BJ (cell line): ENCODE measurements at regions of chr9 and their contacts with region 1.

Region 1: GRCh38 chr9:112207451-112207850 is 32.4 kb upstream of the SUSD1 start:
- DNase-seq: no peak
- H3K4me3 ChIP-seq: no peak overlapping the region
- H3K27me3 ChIP-seq: no peaks in the 10 kb centered on the region
- CTCF ChIP-seq: no peak

Region 2: DNA sequence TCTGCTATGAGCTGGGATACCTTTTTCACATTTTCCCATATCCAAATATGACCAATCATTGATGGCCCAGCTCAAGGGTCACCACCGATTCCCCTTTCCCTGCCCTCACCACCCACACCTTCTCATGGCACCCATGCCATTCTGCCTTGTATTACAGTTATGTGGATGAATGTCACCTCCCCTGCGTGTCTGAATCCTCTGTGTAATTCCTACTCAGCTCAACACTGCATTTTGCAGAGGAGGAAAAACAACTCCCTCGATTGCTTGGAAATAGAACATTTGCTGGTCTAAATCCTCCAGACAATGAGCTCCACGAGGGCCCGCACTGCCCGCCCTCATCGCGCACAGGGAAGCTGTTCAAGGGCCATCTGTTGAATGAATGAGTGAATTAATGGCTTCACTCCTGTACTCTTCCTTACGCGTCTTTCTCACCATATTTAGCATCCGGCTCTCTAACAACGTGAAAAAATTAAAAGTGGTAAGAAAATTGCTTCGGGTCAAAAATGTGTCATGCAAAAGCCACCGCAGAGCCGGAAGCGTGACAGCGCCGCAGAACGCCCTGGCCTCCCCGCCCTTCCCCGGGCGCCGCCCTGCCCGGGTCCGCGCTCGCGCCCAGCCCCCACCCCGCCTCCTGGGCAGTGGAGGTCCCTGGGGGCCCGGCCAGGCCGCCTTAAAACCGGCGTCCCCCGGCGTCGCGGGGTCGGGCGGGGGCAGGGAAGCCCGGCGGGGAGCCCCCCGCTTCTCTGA is 33.1 kb before region 1 on chr9:
- CTCF ChIA-PET with region 1: no interaction called
- POLR2A ChIA-PET with region 1: no interaction called
- DNase-seq: no peak
- H3K4me3 ChIP-seq: peak overlapping the region; percentile 50
- H3K27me3 ChIP-seq: no peaks in the 10 kb centered on the region
- CTCF ChIP-seq: no peak

Region 3: DNA sequence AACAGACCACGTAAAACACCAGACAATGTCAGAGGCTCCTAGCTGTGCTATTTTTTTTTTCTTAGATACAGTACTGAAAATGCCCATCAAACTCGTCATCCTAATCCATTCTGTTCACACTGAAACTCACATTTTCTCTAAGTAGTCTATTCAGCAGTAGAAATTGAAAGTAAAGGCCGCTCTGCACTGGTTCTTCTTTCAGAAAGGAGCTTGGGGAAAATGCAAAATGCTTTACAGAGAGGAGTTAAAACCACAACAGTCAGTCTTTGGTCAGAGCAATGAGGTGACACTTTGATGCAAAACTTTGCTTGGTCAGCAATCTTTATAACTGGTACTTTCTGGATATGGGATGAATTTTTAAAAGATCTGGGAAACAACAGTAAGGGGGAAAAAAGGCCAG is 11.5 kb after region 1 on chr9:
- CTCF ChIA-PET with region 1: no interaction called
- POLR2A ChIA-PET with region 1: no interaction called
- DNase-seq: no peak
- H3K4me3 ChIP-seq: no peak overlapping the region
- H3K27me3 ChIP-seq: no peaks in the 10 kb centered on the region
- CTCF ChIP-seq: no peak

Region 4: DNA sequence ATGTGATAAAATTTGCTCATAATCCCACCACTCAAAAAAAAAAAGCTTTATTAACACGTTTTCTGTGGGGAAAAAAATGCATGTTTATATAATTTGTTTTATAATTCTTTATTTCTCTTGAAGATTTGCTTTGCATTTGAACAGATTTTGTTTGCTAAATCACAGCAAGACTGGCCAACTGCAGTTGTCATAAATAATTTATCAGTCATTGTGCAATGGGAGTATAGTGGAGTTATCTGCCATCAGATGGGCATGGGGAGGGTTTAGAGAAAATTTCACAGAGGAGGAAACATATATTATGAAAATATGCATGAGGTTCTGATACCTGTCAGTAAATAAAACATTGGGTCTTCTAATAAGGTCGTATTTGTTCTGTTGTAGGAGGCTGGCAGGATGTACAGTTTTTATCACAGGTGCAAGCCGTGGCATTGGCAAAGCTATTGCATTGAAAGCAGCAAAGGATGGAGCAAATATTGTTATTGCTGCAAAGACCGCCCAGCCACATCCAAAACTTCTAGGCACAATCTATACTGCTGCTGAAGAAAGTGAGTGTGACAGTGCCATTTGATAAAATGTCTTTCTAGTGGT is 196.3 kb after region 1 on chr9:
- CTCF ChIA-PET with region 1: no interaction called
- POLR2A ChIA-PET with region 1: interaction called, 10 read pairs
- DNase-seq: no peak
- H3K4me3 ChIP-seq: no peak overlapping the region
- H3K27me3 ChIP-seq: no peaks in the 10 kb centered on the region
- CTCF ChIP-seq: no peak